OCI-LY7 (cell line): ENCODE measurements at regions of chr1 and their contacts with region 1.

Region 1: DNA sequence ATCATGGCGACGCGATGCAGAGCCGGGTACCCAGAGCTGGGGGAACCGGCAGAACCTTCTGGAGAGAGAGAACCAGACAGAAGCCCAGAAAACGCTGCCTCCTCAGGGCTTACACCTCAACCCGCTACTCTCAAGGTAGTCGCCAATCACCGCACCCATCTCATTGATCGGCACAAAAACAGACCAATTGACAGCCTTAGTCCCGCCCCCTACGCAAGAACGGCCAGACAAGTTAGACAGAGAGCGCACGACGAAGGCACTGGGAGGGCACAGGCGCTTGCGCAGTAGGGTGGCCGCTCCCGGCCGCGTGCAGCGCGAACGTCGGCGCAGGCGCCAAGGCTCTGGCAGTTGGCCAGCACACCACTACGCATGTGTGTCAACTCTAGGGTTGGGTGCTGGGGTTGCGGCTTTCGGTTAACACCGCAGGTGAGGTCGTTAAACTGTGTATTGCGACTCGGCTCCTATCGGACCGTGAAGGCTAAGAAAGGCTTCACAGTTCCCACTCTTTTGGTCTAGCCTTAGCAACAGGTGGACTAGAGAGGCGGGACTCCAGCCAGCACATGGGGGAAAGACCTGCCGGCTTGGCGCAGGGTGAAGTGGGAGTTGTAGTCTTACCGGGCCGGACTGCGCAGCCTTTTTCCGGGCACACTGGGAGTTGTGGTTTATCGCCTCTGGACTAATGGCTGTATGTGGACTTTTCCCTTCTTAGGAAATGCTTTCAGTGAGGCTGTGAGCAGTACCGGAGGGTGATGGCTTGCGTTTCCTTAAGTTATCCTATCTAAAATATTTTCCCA is at the starts of genes CCT3 and TSACC:
- DNase-seq: peak; percentile 99
- H3K4me3 ChIP-seq: peak within 1 kb of the TSS; percentile 98
- H3K27ac ChIP-seq: peak within 1 kb of the TSS; percentile 83
- H3K4me1 ChIP-seq: peaks cover 26% of the 10 kb centered on the region
- CTCF ChIP-seq: no peak
- total RNA-seq, gene CCT3: 385 and 407 TPM in 2 replicates
- total RNA-seq, gene TSACC: 2.3 TPM in 1 of 2 replicates, not detected in the other

Region 2: DNA sequence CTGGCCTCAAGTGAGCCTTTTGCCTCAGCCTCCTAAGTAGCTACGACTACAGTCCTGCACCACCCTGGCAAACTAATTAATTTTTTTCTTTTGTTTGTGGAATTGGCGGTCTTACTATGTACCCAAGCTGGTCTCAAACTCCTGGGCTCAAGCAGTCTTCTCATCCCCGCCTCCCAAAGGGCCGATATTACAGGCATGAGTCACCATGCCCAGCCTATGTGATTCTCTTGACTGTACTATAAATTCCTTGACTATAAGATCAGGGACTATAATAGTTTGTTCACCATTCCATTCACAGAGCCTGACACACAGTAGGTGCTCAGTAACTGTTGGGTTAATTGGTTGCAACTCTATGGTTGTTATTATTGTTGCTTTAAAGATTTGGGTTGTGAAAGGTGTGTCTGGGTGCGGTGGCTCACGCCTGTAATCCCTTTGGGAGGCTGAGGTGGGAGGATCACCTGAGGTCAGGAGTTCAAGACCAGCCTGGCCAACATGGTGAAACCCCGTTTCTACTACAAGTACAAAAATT is 632.2 kb before region 1 on chr1:
- CTCF ChIA-PET with region 1: no interaction called
- POLR2A ChIA-PET with region 1: no interaction called
- intact Hi-C with region 1: no loop called
- DNase-seq: no peak
- H3K4me3 ChIP-seq: no peak overlapping the region
- H3K27ac ChIP-seq: no peak overlapping the region
- H3K4me1 ChIP-seq: no peaks in the 10 kb centered on the region
- CTCF ChIP-seq: no peak

Region 3: DNA sequence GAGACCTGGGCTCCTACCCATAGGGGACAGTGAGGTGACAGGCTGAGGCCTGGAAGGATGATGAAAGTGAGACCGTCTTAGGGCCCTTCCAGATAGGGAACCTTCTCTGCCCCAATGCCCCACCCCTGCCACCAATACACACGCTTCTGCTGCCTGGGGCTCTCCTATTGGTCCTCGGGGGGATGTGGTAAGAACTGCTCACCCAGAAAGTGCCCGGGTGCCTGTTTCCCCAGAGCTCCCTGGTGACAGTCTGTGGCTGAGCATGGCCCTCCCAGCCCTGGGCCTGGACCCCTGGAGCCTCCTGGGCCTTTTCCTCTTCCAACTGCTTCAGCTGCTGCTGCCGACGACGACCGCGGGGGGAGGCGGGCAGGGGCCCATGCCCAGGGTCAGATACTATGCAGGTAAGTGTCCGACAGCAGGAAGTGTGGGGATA is 184.0 kb before region 1 on chr1:
- CTCF ChIA-PET with region 1: no interaction called
- POLR2A ChIA-PET with region 1: interaction called, 3 read pairs
- intact Hi-C with region 1: loop called (anchors 5 kb)
- DNase-seq: peak; percentile 88
- H3K4me3 ChIP-seq: peak overlapping the region; percentile 78
- H3K27ac ChIP-seq: peak overlapping the region; percentile 95
- H3K4me1 ChIP-seq: peaks cover 77% of the 10 kb centered on the region
- CTCF ChIP-seq: no peak

Region 4: DNA sequence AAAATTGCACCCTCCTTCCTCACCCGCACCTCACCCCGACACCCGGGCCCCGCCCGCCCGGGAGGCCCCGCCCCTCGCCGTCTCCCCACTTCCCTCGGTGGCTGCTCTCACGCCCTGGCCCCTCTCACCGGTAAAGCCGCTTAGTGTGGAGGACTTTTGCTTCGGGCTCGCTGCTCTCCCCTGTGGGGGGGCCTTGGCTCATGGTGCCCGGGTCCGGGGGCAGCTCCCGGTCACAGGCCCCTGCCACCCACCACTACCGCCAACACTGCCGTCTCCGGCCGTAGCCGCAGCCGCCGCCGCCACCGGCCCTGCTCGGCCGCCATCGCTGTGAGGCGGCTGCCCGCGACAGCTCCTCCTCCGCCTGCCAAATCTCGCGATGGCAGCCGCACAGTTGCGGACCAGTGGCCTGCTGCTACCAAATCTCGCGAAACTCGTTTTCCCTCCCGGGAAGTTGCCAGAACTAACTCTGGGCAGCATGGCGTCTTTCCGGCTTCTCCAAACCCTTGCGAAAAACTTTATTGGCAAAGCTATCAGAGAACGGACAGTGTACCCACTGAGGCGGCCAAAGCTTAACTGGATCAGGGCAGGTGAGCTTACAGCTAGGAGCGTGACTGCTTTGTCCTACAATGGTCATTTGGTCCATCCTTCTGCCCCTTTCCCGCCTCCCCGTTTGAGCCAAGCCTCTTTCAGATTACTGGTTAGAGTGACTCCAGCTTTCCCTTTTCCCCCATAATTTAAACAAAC is 55.7 kb before region 1 on chr1 and contains the start of gene SMG5:
- CTCF ChIA-PET with region 1: interaction called, 3 read pairs
- POLR2A ChIA-PET with region 1: interaction called, 3 read pairs
- intact Hi-C with region 1: loop called (anchors 1 kb)
- DNase-seq: peak; percentile 99
- H3K4me3 ChIP-seq: peak within 1 kb of the TSS; percentile 82
- H3K27ac ChIP-seq: peak within 1 kb of the TSS; percentile 66
- H3K4me1 ChIP-seq: peaks cover 26% of the 10 kb centered on the region
- CTCF ChIP-seq: no peak
- total RNA-seq, gene SMG5: 87.0 and 87.9 TPM in 2 replicates

Region 5: GRCh38 chr1:156319664-156320063 is 18.7 kb before region 1 on chr1:
- CTCF ChIA-PET with region 1: no interaction called
- POLR2A ChIA-PET with region 1: no interaction called
- intact Hi-C with region 1: no loop called
- DNase-seq: peak; percentile 42
- H3K4me3 ChIP-seq: no peak overlapping the region
- H3K27ac ChIP-seq: no peak overlapping the region
- H3K4me1 ChIP-seq: no peaks in the 10 kb centered on the region
- CTCF ChIP-seq: peak; percentile 87

Region 6: GRCh38 chr1:156383023-156383422 is 44.6 kb after region 1 on chr1:
- CTCF ChIA-PET with region 1: no interaction called
- POLR2A ChIA-PET with region 1: no interaction called
- intact Hi-C with region 1: no loop called
- DNase-seq: peak; percentile 71
- H3K4me3 ChIP-seq: no peak overlapping the region
- H3K27ac ChIP-seq: no peak overlapping the region
- H3K4me1 ChIP-seq: peaks cover 3% of the 10 kb centered on the region
- CTCF ChIP-seq: peak; percentile 86

Region 7: DNA sequence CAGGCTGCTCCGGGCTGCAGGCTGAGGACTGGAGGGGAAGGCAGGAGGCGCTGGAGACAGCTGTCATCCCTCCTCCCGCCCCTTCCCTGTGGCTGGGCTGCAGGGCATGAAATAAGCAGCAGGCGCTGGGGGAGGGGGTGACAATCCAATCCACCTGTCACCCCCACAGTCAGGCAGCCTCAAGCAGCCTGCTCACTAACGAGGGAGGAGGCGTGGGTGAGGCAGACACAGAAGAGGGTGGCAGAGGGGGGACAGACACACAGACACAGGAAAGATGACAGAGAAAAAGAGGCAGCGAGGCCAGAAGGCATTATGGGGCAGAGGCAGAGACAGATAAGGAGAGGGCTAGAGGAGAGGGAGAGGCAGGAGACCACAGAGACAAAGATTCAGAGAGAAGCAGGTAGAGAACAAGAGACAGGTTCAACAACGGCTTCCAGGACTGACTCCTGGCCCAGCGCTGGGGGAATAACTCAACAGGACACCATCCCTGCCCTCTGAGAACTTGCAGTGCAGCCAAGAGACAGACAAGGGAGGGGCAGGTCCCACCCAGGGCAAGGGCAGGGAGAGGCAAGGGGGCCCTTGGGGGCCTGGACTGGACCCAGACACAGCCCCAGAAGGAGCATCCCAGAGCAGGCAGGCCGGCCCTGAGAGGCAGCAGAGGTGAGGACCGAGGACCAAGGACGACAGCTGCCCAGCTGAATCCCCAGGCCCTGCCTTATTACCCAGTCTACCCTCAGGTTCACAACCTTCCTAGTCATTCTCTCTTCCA is 151.0 kb after region 1 on chr1:
- CTCF ChIA-PET with region 1: no interaction called
- POLR2A ChIA-PET with region 1: interaction called, 5 read pairs
- intact Hi-C with region 1: loop called (anchors 5 kb)
- DNase-seq: peak; percentile 67
- H3K4me3 ChIP-seq: peak overlapping the region; percentile 98
- H3K27ac ChIP-seq: peak overlapping the region; percentile 98
- H3K4me1 ChIP-seq: peaks cover 93% of the 10 kb centered on the region
- CTCF ChIP-seq: no peak; the same call in 1 of the 2 replicates